ENCODE measurements at regions of chr7 and their contacts with region 1.

Region 1: GRCh38 chr7:111741811-111742240 is 179.5 kb upstream of the IMMP2L start:
- DNase-seq: peak; percentile 55
- ATAC-seq: peak; percentile 86
- H3K4me3 Mint-ChIP-seq: no peak overlapping the region
- H3K27ac Mint-ChIP-seq: no peak overlapping the region
- H3K4me1 Mint-ChIP-seq: no peaks in the 10 kb centered on the region
- H3K27me3 Mint-ChIP-seq: peaks cover 2% of the 10 kb centered on the region

Region 2: GRCh38 chr7:111682588-111683340 is 59.1 kb before region 1 on chr7:
- CTCF ChIA-PET with region 1: no interaction called
- POLR2A ChIA-PET with region 1: no interaction called
- intact Hi-C with region 1: no loop called
- DNase-seq: no peak
- ATAC-seq: no peak
- H3K4me3 Mint-ChIP-seq: no peak overlapping the region
- H3K27ac Mint-ChIP-seq: no peak overlapping the region
- H3K4me1 Mint-ChIP-seq: no peaks in the 10 kb centered on the region
- H3K27me3 Mint-ChIP-seq: peaks cover 4% of the 10 kb centered on the region

Region 3: DNA sequence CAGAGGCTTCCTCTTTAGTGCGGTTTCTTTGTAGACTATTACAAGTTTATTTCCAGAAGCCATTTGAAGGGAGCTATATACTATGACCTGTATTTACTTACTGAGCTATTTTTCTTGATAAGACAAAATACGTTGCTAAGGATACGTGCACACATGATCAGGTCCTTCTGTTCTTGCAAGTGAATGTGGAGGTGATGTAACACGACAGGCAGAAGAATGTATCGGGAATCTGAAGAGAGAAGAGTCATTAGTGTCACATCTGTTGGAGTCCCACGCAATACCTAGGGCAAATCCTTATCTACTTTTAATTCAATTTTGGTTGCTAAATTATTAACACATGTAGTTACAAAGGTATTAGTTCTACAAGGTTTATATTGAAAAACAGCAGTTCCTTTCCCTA is 105.1 kb after region 1 on chr7:
- CTCF ChIA-PET with region 1: no interaction called
- POLR2A ChIA-PET with region 1: no interaction called
- intact Hi-C with region 1: no loop called
- DNase-seq: no peak
- ATAC-seq: no peak
- H3K4me3 Mint-ChIP-seq: no peak overlapping the region
- H3K27ac Mint-ChIP-seq: no peak overlapping the region
- H3K4me1 Mint-ChIP-seq: peaks cover 2% of the 10 kb centered on the region
- H3K27me3 Mint-ChIP-seq: peaks cover 4% of the 10 kb centered on the region

Region 4: DNA sequence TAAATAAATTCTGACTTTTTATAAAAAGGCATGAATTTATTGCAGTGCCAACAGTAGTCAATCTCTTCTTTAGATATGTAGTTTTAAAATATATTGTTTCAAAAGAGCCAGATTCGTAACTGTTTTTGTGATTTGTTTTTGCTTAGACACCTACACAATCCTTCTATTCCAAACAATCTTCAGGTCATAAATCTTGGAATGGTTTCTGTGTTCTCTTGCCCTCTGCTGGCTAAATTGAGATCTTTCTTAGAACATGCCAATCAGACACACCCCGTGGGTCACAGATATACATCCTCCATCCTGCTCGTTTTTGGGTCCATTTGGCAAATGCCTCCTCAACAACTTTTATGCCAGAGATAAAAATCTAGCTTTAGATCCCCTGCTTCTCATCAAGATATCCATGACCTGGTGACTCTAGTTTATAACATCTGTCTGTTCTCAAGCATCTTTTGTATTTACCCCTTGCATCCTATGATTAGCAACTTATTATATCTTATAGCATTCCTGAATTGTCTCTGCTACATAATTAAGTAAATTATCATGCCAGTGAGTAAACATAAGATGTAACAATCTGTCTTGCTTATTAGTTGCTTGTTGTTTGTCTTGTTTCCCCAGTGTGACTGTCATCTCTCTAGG is 673.1 kb after region 1 on chr7:
- CTCF ChIA-PET with region 1: no interaction called
- POLR2A ChIA-PET with region 1: no interaction called
- intact Hi-C with region 1: loop called in 1 of 2 experiments (anchors 5 kb)
- DNase-seq: no peak
- ATAC-seq: no peak
- H3K4me3 Mint-ChIP-seq: no peak overlapping the region
- H3K27ac Mint-ChIP-seq: no peak overlapping the region
- H3K4me1 Mint-ChIP-seq: peaks cover 7% of the 10 kb centered on the region
- H3K27me3 Mint-ChIP-seq: peaks cover 6% of the 10 kb centered on the region

Region 5: DNA sequence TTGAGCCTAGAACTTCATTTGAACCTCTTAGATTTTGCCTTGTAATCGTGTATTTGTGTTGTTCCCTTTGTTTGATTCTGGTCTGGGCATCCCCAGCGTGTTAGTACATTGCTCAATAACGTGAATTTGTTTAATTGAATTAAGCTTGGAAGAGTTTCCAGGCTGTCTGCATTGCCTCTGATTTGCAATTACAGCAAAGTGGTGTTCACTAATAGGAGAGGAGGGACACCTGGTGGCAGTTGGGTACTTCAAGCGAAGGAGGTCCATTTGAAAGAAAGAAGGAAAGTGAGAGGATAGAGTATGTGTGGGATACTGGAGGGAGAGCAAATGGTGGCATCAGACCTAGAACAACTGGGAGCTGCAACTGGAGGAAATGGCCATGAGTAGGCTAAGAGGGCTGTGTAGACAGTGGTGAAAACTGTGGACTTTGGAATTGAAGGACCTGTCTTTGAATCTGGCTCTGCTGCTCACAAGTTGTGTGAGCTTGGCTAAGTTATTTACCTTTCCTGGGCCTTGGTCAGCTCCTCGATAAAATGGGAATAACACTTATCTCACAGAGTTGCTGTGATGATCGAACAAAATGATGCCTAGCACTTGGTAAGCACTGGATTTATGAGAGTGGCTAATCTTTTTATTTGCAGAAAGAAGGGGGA is 754.1 kb after region 1 on chr7:
- CTCF ChIA-PET with region 1: interaction called, 5 read pairs
- POLR2A ChIA-PET with region 1: no interaction called
- intact Hi-C with region 1: loop called (anchors 1 kb)
- DNase-seq: peak; percentile 58
- ATAC-seq: no peak
- H3K4me3 Mint-ChIP-seq: no peak overlapping the region
- H3K27ac Mint-ChIP-seq: no peak overlapping the region
- H3K4me1 Mint-ChIP-seq: no peaks in the 10 kb centered on the region
- H3K27me3 Mint-ChIP-seq: peaks cover 4% of the 10 kb centered on the region

Region 6: DNA sequence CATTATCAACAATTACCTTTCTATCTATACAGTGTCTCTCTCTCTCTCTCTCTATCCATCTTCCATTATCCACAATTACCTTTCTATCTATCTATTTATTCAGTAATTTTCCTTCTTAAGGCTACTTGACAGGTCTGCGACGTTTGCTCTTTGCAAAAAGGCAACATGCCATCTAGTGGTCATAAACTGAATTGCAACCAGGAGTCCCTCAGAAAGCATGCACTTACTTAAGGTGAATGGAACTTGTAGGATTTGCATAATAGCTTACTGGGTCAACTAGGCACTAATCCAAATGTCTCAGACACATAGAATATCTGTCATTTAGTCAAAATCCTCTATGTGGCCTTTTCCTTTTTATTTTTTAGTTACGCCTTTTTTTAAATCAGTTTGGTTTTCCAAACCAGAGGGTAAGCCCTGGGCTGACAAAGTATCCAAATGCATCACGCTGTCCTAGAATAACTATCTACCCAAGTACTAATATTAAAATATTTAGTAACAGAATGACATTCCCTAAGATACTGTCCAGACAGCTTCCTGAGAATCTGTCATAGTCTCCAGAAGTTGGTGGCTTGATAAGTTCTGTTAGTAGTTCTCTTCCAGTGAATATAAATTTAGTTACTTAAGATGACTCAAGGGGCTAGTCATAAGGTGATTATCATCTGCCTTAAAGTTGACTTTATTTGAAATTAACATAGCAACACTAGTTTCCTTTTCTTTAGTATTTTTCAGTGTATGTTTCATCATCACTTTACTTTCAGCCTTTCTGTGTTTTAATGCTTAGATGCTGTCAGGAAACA is 1968.7 kb after region 1 on chr7:
- CTCF ChIA-PET with region 1: no interaction called
- POLR2A ChIA-PET with region 1: no interaction called
- intact Hi-C with region 1: loop called in 1 of 2 experiments (anchors 5 kb)
- DNase-seq: peak; percentile 45
- ATAC-seq: peak; percentile 47
- H3K4me3 Mint-ChIP-seq: no peak overlapping the region
- H3K27ac Mint-ChIP-seq: no peak overlapping the region
- H3K4me1 Mint-ChIP-seq: no peaks in the 10 kb centered on the region
- H3K27me3 Mint-ChIP-seq: peaks cover 8% of the 10 kb centered on the region